ENCODE measurements at regions of chr15 and their contacts with region 1.

Region 1: GRCh38 chr15:63752075-63752684 is 81.6 kb downstream of the HERC1 start:
- DNase-seq: no peak
- H3K4me3 ChIP-seq: no peak overlapping the region
- H3K27ac ChIP-seq: no peak overlapping the region
- H3K4me1 ChIP-seq: no peaks in the 10 kb centered on the region
- H3K27me3 ChIP-seq: no peaks in the 10 kb centered on the region
- CTCF ChIP-seq: peak; percentile 48 to 67 (median 61)
- POLR2A ChIP-seq: no peak

Region 2: DNA sequence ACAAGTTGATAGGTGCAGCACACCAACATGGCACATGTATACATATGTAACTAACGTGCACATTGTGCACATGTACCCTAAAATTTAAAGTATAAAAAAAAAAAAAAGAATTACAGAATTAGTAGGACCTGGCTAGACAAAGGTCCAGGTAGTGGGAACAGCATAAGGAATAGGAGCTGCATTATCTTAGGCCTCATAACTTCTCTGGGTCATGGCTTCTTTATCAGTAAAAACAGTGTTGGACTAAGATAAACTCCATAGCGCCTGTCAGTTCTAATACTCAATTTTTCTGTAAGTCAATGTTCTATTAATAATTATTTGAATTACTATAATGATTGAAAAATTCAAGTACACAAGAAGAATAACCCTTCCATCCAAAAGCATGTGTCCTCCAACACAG is 16.7 kb before region 1 on chr15:
- intact Hi-C with region 1: no loop called
- DNase-seq: no peak
- H3K4me3 ChIP-seq: no peak overlapping the region
- H3K27ac ChIP-seq: no peak overlapping the region
- H3K4me1 ChIP-seq: no peaks in the 10 kb centered on the region
- H3K27me3 ChIP-seq: no peaks in the 10 kb centered on the region
- CTCF ChIP-seq: no peak
- POLR2A ChIP-seq: no peak

Region 3: DNA sequence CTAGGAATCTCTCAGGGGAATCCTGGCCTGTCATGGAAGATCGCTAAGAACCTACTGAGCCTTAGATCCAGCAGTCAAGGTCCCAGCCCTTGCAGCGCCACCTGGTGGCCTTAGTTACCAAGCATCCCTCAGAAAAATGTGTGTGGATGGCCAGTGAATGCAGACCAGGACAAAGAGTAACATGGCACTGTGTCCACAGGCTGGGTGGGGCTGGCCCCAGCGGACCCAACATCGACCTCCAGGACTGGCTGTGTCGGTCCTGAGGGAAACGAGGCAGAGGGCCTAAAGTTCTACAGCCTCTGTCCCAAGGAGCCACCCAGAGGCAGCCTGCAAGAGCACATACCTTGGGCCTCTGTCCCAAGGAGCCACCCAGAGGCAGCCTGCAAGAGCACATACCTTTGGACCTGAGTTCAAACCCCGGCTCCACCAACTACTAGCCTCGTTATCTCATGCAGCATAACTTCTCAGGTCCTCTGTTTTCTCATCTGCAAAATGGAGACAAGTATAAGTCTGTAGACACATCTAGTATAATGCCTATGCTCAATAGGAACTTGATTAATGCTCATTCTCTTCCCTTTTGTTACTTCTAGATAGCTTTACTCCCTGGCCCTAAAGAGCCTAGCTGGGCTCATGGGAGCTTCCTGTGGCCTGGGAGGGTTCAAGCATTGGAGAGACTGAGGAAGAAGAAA is 139.0 kb after region 1 on chr15:
- intact Hi-C with region 1: loop called (anchors 10 kb)
- DNase-seq: no peak
- H3K4me3 ChIP-seq: no peak overlapping the region
- H3K27ac ChIP-seq: no peak overlapping the region
- H3K4me1 ChIP-seq: peaks cover 25% of the 10 kb centered on the region
- H3K27me3 ChIP-seq: no peaks in the 10 kb centered on the region
- CTCF ChIP-seq: peak; percentile 59 to 75 (median 72)
- POLR2A ChIP-seq: no peak

Region 4: GRCh38 chr15:64067564-64068030 is 315.4 kb after region 1 on chr15:
- intact Hi-C with region 1: loop called (anchors 5 kb)
- DNase-seq: no peak
- H3K4me3 ChIP-seq: no peak overlapping the region
- H3K27ac ChIP-seq: peak overlapping the region; percentile 77
- H3K4me1 ChIP-seq: peaks cover 45% of the 10 kb centered on the region
- H3K27me3 ChIP-seq: no peaks in the 10 kb centered on the region
- CTCF ChIP-seq: peak; percentile 83 to 91 (median 90)
- POLR2A ChIP-seq: no peak